B cell (primary cell): ENCODE measurements at regions of chr5 and their contacts with region 1.

Region 1: GRCh38 chr5:56270568-56271392 is 37.6 kb upstream of the ANKRD55 start:
- DNase-seq: peak; percentile 85
- ATAC-seq: peak; percentile 99
- H3K4me3 ChIP-seq: peak overlapping the region in 4 of 5 experiments; percentile 1 to 24 (median 8)
- H3K4me3 Mint-ChIP-seq: peak overlapping the region; percentile 73
- H3K27ac ChIP-seq: peak overlapping the region; percentile 26 to 63
- H3K27ac Mint-ChIP-seq: peak overlapping the region; percentile 76
- H3K4me1 ChIP-seq: peaks cover 23 to 24% of the 10 kb centered on the region in 2 donors
- H3K4me1 Mint-ChIP-seq: peaks cover 19% of the 10 kb centered on the region
- H3K27me3 ChIP-seq: no peaks in the 10 kb centered on the region
- H3K27me3 Mint-ChIP-seq: no peaks in the 10 kb centered on the region
- CTCF ChIP-seq: peak; percentile 97

Region 2: DNA sequence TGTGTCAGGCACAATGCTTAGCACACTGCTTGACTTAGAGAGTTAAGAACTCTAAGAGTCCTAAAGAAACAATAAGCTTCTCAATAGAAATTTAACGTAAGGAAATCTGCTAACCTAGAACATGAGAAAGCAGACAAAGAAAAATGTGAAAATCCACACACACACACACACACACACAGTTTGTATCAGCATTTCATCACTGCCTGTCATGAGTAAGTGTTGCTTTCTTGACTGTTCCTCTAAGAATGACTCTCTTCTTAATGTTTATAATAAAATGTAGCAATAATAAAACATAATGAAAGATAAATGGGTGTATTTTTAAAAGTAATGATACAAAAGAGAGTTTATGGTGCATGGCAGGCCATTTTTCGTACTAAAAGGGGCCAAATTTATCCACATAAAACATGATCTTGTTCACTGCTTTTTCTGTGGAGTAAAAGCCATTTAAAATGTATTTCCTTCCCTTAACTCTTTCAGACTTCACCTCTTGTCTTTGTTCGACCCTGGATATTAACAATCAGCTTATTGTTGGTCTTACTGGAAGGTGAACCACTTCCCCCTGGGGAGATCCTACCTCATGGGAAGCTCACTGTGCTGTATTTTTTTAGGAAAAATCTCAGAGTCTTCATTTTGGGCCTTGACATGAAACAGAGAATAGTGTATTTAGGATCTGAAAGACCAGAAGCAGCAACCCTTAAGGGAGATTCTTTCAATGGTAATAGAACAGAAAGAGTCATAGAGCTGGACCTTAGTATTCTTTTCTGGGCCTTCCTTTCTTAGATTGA is 69.6 kb after region 1 on chr5:
- CTCF ChIA-PET with region 1: interaction called, 3 read pairs
- POLR2A ChIA-PET with region 1: no interaction called
- intact Hi-C with region 1: loop called (anchors 5 kb)
- DNase-seq: no peak
- ATAC-seq: no peak
- H3K4me3 ChIP-seq: no peak overlapping the region
- H3K4me3 Mint-ChIP-seq: no peak overlapping the region
- H3K27ac ChIP-seq: no peak overlapping the region
- H3K27ac Mint-ChIP-seq: no peak overlapping the region
- H3K4me1 ChIP-seq: peaks cover 31 to 40% of the 10 kb centered on the region in 2 donors
- H3K4me1 Mint-ChIP-seq: peaks cover 46% of the 10 kb centered on the region
- H3K27me3 ChIP-seq: no peaks in the 10 kb centered on the region
- H3K27me3 Mint-ChIP-seq: no peaks in the 10 kb centered on the region
- CTCF ChIP-seq: no peak

Region 3: GRCh38 chr5:56565644-56566043 is 294.9 kb after region 1 on chr5:
- CTCF ChIA-PET with region 1: interaction called, 10 read pairs
- POLR2A ChIA-PET with region 1: no interaction called
- intact Hi-C with region 1: loop called (anchors 2 kb)
- DNase-seq: peak; percentile 82
- ATAC-seq: peak; percentile 97
- H3K4me3 ChIP-seq: peak overlapping the region in 3 of 5 experiments; percentile 6 to 20 (median 9)
- H3K4me3 Mint-ChIP-seq: peak overlapping the region; percentile 56
- H3K27ac ChIP-seq: no peak overlapping the region
- H3K27ac Mint-ChIP-seq: peak overlapping the region; percentile 69
- H3K4me1 ChIP-seq: peaks cover 34 to 35% of the 10 kb centered on the region in 2 donors
- H3K4me1 Mint-ChIP-seq: peaks cover 41% of the 10 kb centered on the region
- H3K27me3 ChIP-seq: no peaks in the 10 kb centered on the region
- H3K27me3 Mint-ChIP-seq: no peaks in the 10 kb centered on the region
- CTCF ChIP-seq: no peak

Region 4: DNA sequence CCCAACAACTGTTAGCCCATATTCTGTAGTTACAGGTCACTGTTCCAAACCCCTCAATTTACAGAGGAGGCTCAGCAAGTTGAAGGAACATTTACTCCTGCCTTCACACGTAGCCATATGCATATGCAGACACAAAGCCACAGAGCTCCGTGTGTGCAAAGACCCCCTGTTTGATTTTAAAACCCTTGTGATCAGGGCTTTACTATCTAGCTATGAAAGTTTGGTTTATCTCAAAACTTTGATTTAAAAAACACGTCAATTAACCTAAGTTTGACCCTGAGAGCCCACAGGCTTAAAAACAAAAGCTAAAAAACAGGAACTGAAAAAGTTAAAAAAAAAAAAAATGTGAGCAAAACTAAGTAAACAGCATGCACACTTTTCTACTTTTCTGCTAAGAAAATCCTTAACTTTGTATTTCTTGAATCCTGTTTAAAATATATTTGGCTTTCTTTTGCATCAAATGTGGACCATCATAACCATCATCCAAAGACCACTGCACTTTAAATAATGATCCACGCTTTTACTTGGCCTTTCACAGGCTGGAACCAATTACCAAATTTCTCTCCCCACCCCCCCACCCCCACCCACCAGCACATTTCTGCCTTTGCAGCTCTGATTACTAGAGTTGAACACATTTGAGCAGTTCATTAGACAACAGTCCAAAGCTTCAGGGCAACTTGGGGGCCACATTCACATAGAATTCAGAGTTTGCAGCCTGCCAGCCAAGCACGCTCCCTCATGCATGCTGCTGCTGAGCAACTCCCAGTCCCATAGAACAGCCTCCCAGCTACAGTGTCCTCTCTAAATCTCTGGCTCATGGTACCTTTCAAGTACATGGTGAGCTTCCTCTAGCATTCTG is 415.8 kb after region 1 on chr5:
- CTCF ChIA-PET with region 1: interaction called, 13 read pairs
- POLR2A ChIA-PET with region 1: interaction called, 9 read pairs
- intact Hi-C with region 1: loop called (anchors 2 kb)
- DNase-seq: peak; percentile 82
- ATAC-seq: peak; percentile 78
- H3K4me3 ChIP-seq: peak overlapping the region in 1 of 5 experiments; percentile 33
- H3K4me3 Mint-ChIP-seq: peak overlapping the region; percentile 74
- H3K27ac ChIP-seq: peak overlapping the region; percentile 93 to 97
- H3K27ac Mint-ChIP-seq: peak overlapping the region; percentile 95
- H3K4me1 ChIP-seq: peaks cover 93% of the 10 kb centered on the region in 2 donors
- H3K4me1 Mint-ChIP-seq: peaks cover 94% of the 10 kb centered on the region
- H3K27me3 ChIP-seq: no peaks in the 10 kb centered on the region
- H3K27me3 Mint-ChIP-seq: no peaks in the 10 kb centered on the region
- CTCF ChIP-seq: no peak

Region 5: GRCh38 chr5:56838409-56839039 is 567.7 kb after region 1 on chr5:
- CTCF ChIA-PET with region 1: interaction called, 361 read pairs
- POLR2A ChIA-PET with region 1: interaction called, 7 read pairs
- intact Hi-C with region 1: loop called (anchors 1 kb)
- DNase-seq: peak; percentile 81
- ATAC-seq: peak; percentile 70
- H3K4me3 ChIP-seq: peak overlapping the region in 1 of 5 experiments; percentile 29
- H3K4me3 Mint-ChIP-seq: peak overlapping the region; percentile 47
- H3K27ac ChIP-seq: peak overlapping the region; percentile 48 to 85
- H3K27ac Mint-ChIP-seq: peak overlapping the region; percentile 74
- H3K4me1 ChIP-seq: peaks cover 97% of the 10 kb centered on the region in 2 donors
- H3K4me1 Mint-ChIP-seq: peaks cover 91% of the 10 kb centered on the region
- H3K27me3 ChIP-seq: no peaks in the 10 kb centered on the region
- H3K27me3 Mint-ChIP-seq: no peaks in the 10 kb centered on the region
- CTCF ChIP-seq: peak; percentile 75

Region 6: GRCh38 chr5:56900858-56901578 is 630.2 kb after region 1 on chr5:
- CTCF ChIA-PET with region 1: interaction called, 61 read pairs
- POLR2A ChIA-PET with region 1: no interaction called
- intact Hi-C with region 1: no loop called
- DNase-seq: peak; percentile 73
- ATAC-seq: peak; percentile 67
- H3K4me3 ChIP-seq: no peak overlapping the region
- H3K4me3 Mint-ChIP-seq: no peak overlapping the region
- H3K27ac ChIP-seq: no peak overlapping the region
- H3K27ac Mint-ChIP-seq: no peak overlapping the region
- H3K4me1 ChIP-seq: peaks cover 4 to 8% of the 10 kb centered on the region in 2 donors
- H3K4me1 Mint-ChIP-seq: no peaks in the 10 kb centered on the region
- H3K27me3 ChIP-seq: no peaks in the 10 kb centered on the region
- H3K27me3 Mint-ChIP-seq: no peaks in the 10 kb centered on the region
- CTCF ChIP-seq: peak; percentile 96